ENCODE measurements at regions of chr2 and their contacts with region 1.

Region 1: GRCh38 chr2:178414266-178415247 is 36.4 kb downstream of the PRKRA start:
- DNase-seq: peak; percentile 94
- H3K4me3 ChIP-seq: peak overlapping the region; percentile 49 to 91 (median 69)
- H3K27ac ChIP-seq: peak overlapping the region; percentile 91
- H3K4me1 ChIP-seq: peaks cover 13% of the 10 kb centered on the region
- H3K27me3 ChIP-seq: no peaks in the 10 kb centered on the region
- CTCF ChIP-seq: peak; percentile 90 to 94
- POLR2A ChIP-seq: peak; percentile 86

Region 2: GRCh38 chr2:178112202-178113152 is 302.1 kb before region 1 on chr2 and contains the start of gene RBM45:
- CTCF ChIA-PET with region 1: interaction called, 59 read pairs
- POLR2A ChIA-PET with region 1: interaction called, 5 read pairs
- dilution Hi-C with region 1: no loop called
- intact Hi-C with region 1: loop called (anchors 1 kb)
- DNase-seq: peak; percentile 84
- H3K4me3 ChIP-seq: peak within 1 kb of the TSS; percentile 76 to 84 (median 76)
- H3K27ac ChIP-seq: no peak within 1 kb of the TSS
- H3K4me1 ChIP-seq: peaks cover 6% of the 10 kb centered on the region
- H3K27me3 ChIP-seq: no peaks in the 10 kb centered on the region
- CTCF ChIP-seq: peak; percentile 98 to 100
- POLR2A ChIP-seq: peak; percentile 92
- total RNA-seq, gene RBM45: 11.2 and 12.4 TPM in 2 replicates

Region 3: DNA sequence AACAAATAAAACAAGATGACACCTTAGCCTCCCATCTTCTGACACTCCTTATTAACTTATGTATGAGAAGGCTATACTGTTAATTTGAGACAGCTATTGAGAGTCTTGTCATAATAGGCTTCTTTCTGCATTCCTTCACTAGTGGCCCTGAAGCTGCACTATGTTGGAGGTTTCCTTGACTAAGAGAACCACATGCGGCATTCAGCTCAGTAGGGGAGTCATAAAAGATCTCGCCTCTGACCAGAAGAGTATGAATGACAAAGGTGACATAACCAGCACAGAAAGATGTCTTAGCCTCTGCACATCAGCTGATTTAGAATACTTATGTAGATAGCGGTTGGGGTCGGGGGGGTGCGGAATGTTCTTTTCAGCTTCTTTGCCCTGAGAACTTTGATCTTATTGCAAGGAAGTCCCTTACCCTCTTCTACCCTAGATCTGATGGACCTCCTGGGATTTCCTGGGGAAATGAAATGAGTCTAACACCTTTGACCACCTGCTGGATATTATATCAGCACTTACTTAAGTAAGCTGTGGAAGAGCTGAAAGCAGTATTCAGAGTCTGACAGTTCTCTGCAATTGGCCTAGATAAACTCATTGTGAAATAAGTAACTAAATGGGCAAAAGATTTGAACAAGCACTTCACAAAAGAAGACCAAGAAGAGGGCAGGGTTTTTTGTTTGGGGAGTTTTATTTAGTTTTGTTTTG is 278.1 kb before region 1 on chr2:
- CTCF ChIA-PET with region 1: interaction called, 122 read pairs
- POLR2A ChIA-PET with region 1: no interaction called
- dilution Hi-C with region 1: no loop called
- intact Hi-C with region 1: loop called (anchors 1 kb)
- DNase-seq: no peak
- H3K4me3 ChIP-seq: no peak overlapping the region
- H3K27ac ChIP-seq: no peak overlapping the region
- H3K4me1 ChIP-seq: no peaks in the 10 kb centered on the region
- H3K27me3 ChIP-seq: no peaks in the 10 kb centered on the region
- CTCF ChIP-seq: no peak
- POLR2A ChIP-seq: no peak

Region 4: DNA sequence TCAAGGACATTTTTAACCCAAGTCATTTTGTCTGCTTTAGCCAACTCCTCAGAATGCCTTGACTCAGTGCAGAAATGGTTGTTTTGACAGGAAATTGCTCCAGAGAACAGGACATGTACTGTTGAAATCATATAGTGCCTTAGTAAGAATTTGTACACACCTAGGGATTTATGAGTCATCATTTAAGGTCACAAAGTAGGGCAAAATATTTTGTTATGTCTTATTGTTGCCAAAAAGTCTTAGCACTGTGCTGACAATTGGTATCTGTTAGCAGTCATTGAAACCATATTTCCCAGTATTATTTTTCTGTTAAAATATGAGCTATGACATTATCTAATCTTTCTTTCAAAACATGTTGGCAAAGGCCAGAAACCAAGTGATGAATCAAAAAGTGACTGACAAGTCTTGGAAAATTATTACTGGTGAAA is 115.8 kb before region 1 on chr2:
- CTCF ChIA-PET with region 1: interaction called, 11 read pairs
- POLR2A ChIA-PET with region 1: interaction called, 4 read pairs
- dilution Hi-C with region 1: no loop called
- intact Hi-C with region 1: no loop called
- DNase-seq: peak; percentile 93
- H3K4me3 ChIP-seq: no peak overlapping the region
- H3K27ac ChIP-seq: peak overlapping the region; percentile 37
- H3K4me1 ChIP-seq: peaks cover 29% of the 10 kb centered on the region
- H3K27me3 ChIP-seq: no peaks in the 10 kb centered on the region
- CTCF ChIP-seq: no peak
- POLR2A ChIP-seq: no peak

Region 5: GRCh38 chr2:178404368-178404767 is 10.2 kb before region 1 on chr2:
- CTCF ChIA-PET with region 1: interaction called, 74 read pairs
- POLR2A ChIA-PET with region 1: interaction called, 4 read pairs
- dilution Hi-C with region 1: no loop called
- intact Hi-C with region 1: loop called (anchors 1 kb)
- DNase-seq: peak; percentile 92
- H3K4me3 ChIP-seq: no peak overlapping the region
- H3K27ac ChIP-seq: no peak overlapping the region
- H3K4me1 ChIP-seq: peaks cover 4% of the 10 kb centered on the region
- H3K27me3 ChIP-seq: no peaks in the 10 kb centered on the region
- CTCF ChIP-seq: no peak
- POLR2A ChIP-seq: no peak

Region 6: DNA sequence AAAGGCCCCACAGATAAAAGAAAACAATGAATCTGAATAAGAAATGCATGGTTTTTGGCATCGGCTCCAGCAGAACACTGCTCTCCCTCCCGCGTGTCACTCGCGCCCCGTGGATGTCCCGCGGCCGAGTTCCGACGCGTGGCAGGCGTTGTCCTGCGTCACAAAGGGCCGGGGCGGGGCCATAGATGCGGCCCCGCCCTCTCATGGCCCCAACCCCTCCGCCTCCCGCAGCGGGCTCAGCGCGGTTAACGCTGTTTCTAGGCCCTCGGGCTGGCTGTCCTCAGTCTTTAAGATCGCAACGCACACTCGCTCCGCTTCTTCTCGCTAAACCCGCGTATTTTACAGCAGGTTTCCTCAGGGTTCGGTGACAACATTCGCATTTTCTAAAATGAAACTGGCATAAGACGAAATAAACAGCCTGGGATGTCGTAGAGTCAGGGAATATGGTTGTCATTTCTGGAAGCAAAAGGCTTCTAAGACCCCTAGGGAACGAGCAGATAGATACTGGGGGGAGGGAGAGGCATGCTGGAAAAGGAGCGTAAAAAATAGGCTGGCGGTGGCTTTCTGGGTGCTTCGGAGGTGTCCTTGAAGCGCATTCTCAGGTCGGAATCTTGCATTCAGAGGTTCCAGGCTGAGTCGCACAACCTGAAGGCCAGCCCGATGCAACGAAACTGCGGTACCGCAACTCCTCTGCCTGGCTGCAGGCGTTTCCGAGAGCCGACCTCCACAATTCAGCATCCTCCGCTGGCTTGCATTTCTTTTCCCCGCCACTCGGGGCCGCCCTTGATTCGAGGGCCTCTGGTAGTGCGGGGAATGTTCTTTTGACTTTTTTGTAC is 64.1 kb after region 1 on chr2 and contains the start of gene FKBP7:
- CTCF ChIA-PET with region 1: interaction called, 8 read pairs
- POLR2A ChIA-PET with region 1: no interaction called
- dilution Hi-C with region 1: no loop called
- intact Hi-C with region 1: loop called (anchors 1 kb)
- DNase-seq: peak; percentile 85
- H3K4me3 ChIP-seq: peak within 1 kb of the TSS; percentile 51 to 98 (median 91)
- H3K27ac ChIP-seq: peak within 1 kb of the TSS; percentile 88
- H3K4me1 ChIP-seq: peaks cover 29% of the 10 kb centered on the region
- H3K27me3 ChIP-seq: no peaks in the 10 kb centered on the region
- CTCF ChIP-seq: peak; percentile 68 to 71
- POLR2A ChIP-seq: peak; percentile 63
- total RNA-seq, gene FKBP7: 18.3 and 20.5 TPM in 2 replicates

Measured in endothelial cell of umbilical vein (primary cell).